Posterior vena cava (tissue), 2 donors: ENCODE measurements at regions of chr7 and their contacts with region 1.

Region 1: GRCh38 chr7:106542550-106543220 is 118.3 kb downstream of the CCDC71L start:
- DNase-seq: no peak

Region 2: DNA sequence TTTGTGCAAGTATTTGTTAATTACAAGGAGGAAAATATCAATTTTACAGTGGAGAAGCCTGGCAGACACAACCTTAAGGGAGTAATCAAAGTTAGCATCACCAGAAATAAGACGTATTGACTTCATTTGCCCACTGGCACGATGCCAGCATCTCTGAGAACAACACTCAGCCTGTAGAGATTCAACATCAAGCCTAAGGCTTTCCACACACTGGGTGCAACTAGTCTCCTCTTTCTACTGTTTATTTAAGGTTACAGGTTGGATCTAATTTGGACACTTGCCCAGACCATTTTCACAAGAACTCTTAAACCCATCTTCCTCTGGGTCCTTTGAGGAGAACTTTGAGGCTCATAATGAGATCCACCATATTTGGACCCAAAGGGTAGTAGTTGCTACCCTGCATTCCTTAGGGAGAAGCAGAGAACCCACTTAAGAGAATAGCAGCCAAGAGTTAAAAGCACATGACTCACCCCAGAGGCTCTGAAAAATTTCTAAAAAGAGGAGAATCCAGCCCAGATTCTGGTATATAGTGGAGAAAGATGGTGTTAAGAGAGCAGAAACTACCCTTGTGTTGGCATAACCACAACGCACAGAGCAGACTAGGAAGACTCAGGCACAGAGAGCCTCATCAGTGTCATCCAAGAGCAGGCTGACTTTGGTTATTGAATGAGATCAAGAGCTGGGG is 20.9 kb after region 1 on chr7:
- intact Hi-C with region 1: no loop called
- DNase-seq: no peak

Region 3: DNA sequence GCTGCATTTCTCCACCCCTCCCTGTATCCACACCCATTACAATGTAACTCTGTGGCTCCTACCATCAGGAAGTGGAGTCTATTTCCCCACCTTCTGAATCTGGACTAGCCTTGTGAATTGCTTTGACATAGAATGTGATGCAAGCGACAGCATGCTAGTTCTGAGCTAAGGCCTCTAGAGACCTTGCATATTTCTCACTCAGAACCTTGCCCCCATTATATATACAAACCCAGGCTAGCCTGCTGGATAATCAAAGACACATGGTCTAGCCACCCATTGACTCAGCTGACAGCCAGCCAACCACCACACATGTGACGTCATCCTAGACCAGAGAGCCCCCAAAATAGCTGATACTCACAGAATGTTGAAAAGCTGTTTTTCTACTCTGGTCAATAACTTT is 40.4 kb after region 1 on chr7:
- intact Hi-C with region 1: no loop called
- DNase-seq: no peak

Region 4: DNA sequence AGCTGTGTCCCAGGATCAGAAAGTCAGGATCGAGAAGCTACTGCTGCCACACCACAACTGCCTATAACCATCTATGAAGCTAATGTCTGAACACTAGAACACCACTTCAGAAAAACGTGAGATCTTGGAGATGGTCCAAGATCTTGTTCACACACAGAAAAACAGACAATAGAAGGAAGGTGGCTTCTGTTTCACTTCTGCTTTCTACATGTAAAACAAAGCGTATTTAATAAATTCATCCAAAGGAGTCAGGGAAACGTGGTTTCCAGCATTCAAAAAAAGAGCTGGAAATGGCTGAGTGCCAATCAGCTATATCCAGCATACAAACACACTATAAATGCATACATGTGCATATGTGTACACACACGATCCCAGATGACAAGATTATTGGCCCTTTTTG is 188.5 kb after region 1 on chr7:
- intact Hi-C with region 1: loop called in 1 of 2 experiments (anchors 5 kb)
- DNase-seq: no peak

Region 5: GRCh38 chr7:106883456-106884026 is 340.9 kb after region 1 on chr7:
- intact Hi-C with region 1: no loop called
- DNase-seq: no peak